Psoas muscle (tissue), 8 donors: ENCODE measurements at regions of chr4 and their contacts with region 1.

Region 1: DNA sequence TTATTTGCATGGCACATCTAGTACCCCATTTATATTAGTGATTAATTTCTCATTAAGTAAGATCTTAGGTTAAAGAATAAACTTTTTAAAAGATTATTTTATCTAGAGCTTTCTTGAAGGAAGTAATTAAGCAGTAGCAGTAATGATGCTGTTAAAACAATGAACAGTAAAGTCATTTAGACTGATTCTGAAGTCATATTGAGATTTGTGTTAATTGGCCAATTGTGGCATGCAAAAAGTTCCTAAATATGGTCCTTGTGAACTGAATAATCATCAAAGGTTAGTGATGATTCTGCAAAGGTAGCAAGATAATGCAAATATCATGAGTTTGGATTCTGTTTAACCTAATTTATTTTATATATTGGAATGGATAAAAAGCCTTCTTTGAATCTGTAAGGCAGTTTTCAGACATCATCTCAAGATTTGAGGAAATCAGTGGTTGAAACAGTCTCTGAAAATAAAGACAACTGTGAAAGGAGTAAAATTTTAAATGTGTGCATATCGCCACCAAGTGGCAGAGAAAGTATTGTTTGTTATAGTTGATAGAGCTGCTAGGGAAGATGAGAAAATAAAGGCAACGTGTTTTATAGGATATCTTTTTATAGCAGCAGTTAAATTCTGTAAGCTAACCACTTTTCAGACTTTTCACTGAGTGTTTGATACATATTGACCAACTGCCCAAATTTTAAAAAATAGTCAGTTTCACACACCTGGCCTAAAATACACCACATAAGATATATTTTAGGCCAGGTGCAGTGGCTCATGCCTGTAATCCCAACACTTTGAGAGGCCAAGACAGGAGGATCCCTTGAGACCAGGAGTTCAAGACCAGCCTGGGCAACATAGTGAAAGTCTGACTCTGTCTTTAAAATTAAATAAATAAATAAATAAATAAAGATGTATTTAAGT is 79.6 kb downstream of the CCKAR start:
- DNase-seq: no peak
- ATAC-seq: peak; percentile 46 to 85 (median 59)
- H3K4me3 ChIP-seq: no peak overlapping the region
- H3K27ac ChIP-seq: no peak overlapping the region
- H3K4me1 ChIP-seq: peaks cover 15% of the 10 kb centered on the region
- H3K27me3 ChIP-seq: no peaks in the 10 kb centered on the region
- CTCF ChIP-seq: peak; percentile 74

Region 2: GRCh38 chr4:25925486-25926201 is 485.0 kb before region 1 on chr4:
- intact Hi-C with region 1: loop called (anchors 10 kb)
- DNase-seq: peak in 1 of 2 donors; percentile 23
- ATAC-seq: no peak
- H3K4me3 ChIP-seq: no peak overlapping the region
- H3K27ac ChIP-seq: no peak overlapping the region
- H3K4me1 ChIP-seq: peaks cover 52% of the 10 kb centered on the region
- H3K27me3 ChIP-seq: no peaks in the 10 kb centered on the region
- CTCF ChIP-seq: peak; percentile 44

Region 3: GRCh38 chr4:25986807-25987206 is 423.8 kb before region 1 on chr4:
- intact Hi-C with region 1: loop called (anchors 2 to 5 kb)
- DNase-seq: no peak
- ATAC-seq: no peak
- H3K4me3 ChIP-seq: no peak overlapping the region
- H3K27ac ChIP-seq: no peak overlapping the region
- H3K4me1 ChIP-seq: no peaks in the 10 kb centered on the region
- H3K27me3 ChIP-seq: no peaks in the 10 kb centered on the region
- CTCF ChIP-seq: no peak

Region 4: DNA sequence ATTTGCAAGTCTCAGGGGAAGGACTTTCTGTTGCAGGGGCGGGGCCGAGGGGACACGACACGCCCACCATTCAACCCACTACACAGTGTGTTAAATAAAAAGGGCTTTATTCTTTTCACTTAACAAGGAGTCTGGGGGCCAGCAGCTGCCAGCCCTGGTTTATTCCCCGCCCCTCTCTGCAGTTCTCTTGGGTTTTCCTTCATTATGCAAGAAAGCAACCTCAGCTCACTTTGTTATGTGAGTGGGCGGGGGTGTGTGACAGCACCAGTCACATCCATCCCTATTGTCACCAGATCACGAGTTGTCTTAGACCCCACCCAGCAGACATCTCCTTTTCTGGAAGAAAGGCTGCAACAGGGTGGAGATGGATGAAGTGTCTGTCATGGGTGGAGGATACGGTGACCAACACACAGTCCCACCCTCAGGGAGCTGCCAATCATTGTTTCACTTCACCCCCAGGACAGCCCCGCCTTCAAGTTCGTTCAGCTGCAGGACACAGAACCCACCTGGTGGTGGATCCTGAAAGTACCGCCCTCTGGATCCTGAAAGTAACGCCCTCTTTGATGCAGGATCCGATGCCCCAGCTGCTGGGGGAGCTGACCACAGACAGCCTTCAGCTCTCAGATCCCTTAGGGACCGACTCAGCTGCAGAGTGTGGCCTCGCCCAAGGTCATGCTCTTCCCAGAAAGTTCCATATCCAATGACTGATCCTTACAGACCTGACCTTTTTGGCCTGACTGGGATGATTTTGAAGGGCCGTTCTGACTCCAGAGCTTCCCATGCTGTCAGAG is 417.0 kb before region 1 on chr4:
- intact Hi-C with region 1: loop called (anchors 2 to 5 kb)
- DNase-seq: peak; percentile 27 to 71
- ATAC-seq: peak; percentile 39 to 70 (median 54)
- H3K4me3 ChIP-seq: no peak overlapping the region
- H3K27ac ChIP-seq: no peak overlapping the region
- H3K4me1 ChIP-seq: no peaks in the 10 kb centered on the region
- H3K27me3 ChIP-seq: no peaks in the 10 kb centered on the region
- CTCF ChIP-seq: peak; percentile 10

Region 5: DNA sequence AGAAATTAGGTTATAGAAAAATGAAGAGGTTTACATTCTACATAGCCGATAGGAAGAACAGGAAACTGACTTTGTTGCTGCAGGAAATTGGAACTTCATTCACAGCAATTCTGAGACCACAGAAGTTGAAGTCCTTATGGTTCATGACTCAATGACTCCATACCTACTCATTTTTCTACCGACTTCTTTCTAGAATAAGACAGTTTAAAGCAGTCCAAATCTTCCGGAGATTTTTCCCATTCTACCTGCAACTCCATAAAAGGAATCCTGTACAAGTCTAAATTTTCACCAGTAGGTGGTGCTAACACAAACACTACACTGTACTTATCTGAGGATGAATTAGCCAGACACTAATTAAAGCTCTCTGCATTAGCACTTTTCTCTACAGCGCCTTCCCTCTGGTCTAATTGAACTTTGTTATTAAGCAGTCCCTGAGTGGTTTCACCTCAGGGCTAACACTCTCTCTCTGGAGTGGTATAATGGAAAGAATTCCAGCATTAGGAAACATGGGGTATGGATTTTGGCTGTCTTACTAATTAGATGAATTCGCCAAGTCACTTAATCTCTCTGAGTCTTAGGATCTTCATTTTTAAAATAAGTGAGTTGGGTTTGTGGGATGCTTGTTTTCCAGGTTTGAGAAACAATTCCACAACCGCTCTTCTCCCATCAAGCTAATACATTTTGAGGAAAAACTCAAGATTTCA is 328.7 kb before region 1 on chr4:
- intact Hi-C with region 1: loop called (anchors 5 kb)
- DNase-seq: no peak
- ATAC-seq: peak in 1 of 4 donors; percentile 49
- H3K4me3 ChIP-seq: no peak overlapping the region
- H3K27ac ChIP-seq: no peak overlapping the region
- H3K4me1 ChIP-seq: peaks cover 34% of the 10 kb centered on the region
- H3K27me3 ChIP-seq: no peaks in the 10 kb centered on the region
- CTCF ChIP-seq: peak; percentile 63

Region 6: DNA sequence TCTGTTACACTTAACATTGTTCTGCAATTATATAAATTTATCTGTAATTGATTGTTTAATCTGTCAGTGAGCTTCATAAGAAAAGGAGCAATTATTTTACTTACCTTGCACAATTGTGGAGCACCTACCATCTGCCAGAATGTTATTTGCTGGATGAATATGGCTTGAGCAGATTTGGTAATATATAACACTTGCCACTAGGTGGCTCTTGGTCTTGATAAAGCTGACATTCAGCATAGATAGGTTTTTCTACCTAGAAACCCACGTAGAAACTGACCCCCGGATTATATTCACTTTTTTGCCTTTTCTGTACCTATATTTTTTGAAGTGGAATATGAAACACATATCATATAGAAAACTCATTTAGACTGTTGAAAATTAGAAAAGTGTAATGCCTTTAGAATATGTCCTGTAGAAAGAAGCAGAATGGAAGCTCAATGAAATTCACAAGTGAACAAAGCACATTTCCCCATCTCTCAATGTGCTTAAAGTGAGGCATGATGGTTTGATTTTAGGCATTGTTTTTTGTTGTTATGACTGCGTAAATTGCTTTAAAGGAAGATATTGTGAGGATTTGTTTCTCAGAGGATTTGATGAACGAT is 80.4 kb before region 1 on chr4:
- intact Hi-C with region 1: loop called (anchors 2 kb)
- DNase-seq: no peak
- ATAC-seq: peak; percentile 67 to 91 (median 82)
- H3K4me3 ChIP-seq: no peak overlapping the region
- H3K27ac ChIP-seq: no peak overlapping the region
- H3K4me1 ChIP-seq: peaks cover 51% of the 10 kb centered on the region
- H3K27me3 ChIP-seq: no peaks in the 10 kb centered on the region
- CTCF ChIP-seq: peak; percentile 72